Endothelial cell of umbilical vein (primary cell): ENCODE measurements at regions of chr9 and their contacts with region 1.

Region 1: DNA sequence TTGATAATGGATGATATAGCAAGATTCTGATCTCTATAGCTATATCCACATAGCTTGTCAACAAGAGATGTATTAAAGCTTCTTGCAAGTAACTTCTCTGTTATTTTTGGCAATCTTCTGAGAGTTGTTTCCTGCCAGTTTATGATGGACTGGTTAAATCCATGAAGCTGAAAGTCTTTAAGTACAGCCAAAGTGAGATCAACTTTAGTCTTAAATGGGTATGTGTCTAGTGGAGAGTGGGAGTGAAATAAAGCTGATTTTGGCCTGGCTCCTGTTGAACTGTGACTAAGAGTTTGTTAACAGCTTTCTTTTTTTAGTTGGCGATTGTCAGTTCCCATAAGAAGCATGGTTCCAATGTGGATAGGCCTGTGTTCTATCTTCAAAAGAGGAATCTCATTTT is 350.9 kb upstream of the PCSK5 start:
- DNase-seq: no peak
- H3K4me3 ChIP-seq: no peak overlapping the region
- H3K27ac ChIP-seq: no peak overlapping the region
- H3K4me1 ChIP-seq: no peaks in the 10 kb centered on the region
- H3K27me3 ChIP-seq: no peaks in the 10 kb centered on the region
- CTCF ChIP-seq: no peak
- POLR2A ChIP-seq: no peak

Region 2: DNA sequence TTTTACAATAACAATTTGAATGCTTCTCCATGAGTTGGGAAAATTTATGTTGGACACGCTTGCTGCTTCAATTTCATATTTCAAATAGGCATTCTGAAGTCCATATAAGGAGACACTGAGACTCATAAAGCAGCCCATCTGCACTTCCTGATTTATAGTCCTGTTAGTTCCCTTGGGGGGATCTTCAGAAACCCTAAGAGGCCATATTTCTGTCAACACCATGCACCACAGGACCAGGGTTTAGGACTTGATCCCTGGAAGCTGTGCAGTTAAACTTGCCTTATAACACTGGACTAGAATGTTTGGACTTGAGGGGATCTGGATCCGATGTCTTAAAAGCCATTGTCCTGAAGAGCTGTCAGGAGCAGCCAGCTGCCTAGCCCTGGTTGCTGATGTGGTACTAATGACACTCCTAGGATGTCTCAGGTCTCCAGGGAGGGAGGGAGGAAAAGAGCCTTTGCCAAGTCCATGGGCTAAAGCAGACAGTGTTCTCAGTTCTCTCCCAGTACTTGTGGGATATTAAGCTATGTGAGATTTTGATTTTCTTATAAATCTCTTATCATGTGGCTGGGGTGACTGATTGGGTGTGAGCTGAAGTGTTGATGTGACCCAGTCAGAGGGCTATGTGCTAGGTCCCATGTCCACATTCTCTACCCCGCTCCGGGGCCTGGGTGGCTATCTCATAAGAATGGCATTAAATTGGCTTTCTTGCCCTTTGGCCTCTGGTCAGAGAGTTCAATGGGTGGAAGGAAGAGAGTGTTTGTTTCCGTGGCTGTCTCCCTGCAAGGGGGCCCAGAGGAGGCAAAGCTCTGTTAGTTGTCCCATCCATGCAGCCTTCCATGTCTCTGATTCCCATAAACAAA is 51.4 kb before region 1 on chr9:
- CTCF ChIA-PET with region 1: no interaction called
- POLR2A ChIA-PET with region 1: no interaction called
- dilution Hi-C with region 1: no loop called
- intact Hi-C with region 1: no loop called
- DNase-seq: no peak
- H3K4me3 ChIP-seq: no peak overlapping the region
- H3K27ac ChIP-seq: no peak overlapping the region
- H3K4me1 ChIP-seq: no peaks in the 10 kb centered on the region
- H3K27me3 ChIP-seq: no peaks in the 10 kb centered on the region
- CTCF ChIP-seq: no peak
- POLR2A ChIP-seq: no peak

Region 3: DNA sequence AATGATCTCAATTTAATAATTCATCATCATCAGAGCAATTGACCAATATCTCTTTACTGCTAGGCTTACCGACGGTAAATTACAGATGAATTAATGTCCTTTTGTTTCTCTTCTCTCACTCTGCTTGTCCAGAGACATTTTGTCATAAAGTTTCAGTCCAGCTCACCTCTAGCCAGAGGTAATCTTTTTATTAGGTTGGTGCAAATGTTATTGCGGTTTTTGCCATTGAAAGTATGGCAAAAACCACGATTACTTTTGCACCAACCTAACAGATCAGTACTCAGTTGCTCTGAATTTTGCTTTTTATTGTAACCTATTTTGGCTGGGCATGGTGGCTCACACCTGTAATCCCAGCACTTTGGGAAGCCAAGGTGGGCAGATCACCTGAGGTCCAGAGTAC is 184.0 kb after region 1 on chr9:
- CTCF ChIA-PET with region 1: no interaction called
- POLR2A ChIA-PET with region 1: no interaction called
- dilution Hi-C with region 1: no loop called
- intact Hi-C with region 1: loop called (anchors 10 kb)
- DNase-seq: no peak
- H3K4me3 ChIP-seq: no peak overlapping the region
- H3K27ac ChIP-seq: no peak overlapping the region
- H3K4me1 ChIP-seq: no peaks in the 10 kb centered on the region
- H3K27me3 ChIP-seq: no peaks in the 10 kb centered on the region
- CTCF ChIP-seq: no peak
- POLR2A ChIP-seq: no peak